ENCODE measurements at regions of chr3 and their contacts with region 1.

Region 1: GRCh38 chr3:58332575-58333188 is at the start of gene PXK:
- DNase-seq: no peak
- ATAC-seq: peak; percentile 92
- H3K4me3 ChIP-seq: peak within 1 kb of the TSS; percentile 93
- H3K27ac ChIP-seq: no peak within 1 kb of the TSS; the same call in 1 of the 2 replicates
- H3K4me1 ChIP-seq: peaks cover 7% of the 10 kb centered on the region; the same call in 1 of the 2 replicates
- H3K27me3 ChIP-seq: no peaks in the 10 kb centered on the region
- CTCF ChIP-seq: peak in 2 of 3 experiments; percentile 14 to 31; a peak in 1 of 6 replicates
- EP300 ChIP-seq: no peak
- POLR2A ChIP-seq: peak; percentile 68
- RAD21 ChIP-seq: peak; percentile 40; the same call in 1 of the 2 replicates
- polyA plus RNA-seq, gene PXK: 8.4 to 10.5 TPM

Region 2: GRCh38 chr3:58260261-58260731 is 72.4 kb before region 1 on chr3:
- CTCF ChIA-PET with region 1: no interaction called
- POLR2A ChIA-PET with region 1: no interaction called
- RAD21 ChIA-PET with region 1: no interaction called
- SMC1A ChIA-PET with region 1: no interaction called
- in situ Hi-C with region 1: no loop called
- intact Hi-C with region 1: no loop called
- DNase-seq: no peak
- ATAC-seq: no peak
- H3K4me3 ChIP-seq: no peak overlapping the region
- H3K27ac ChIP-seq: no peak overlapping the region
- H3K4me1 ChIP-seq: no peaks in the 10 kb centered on the region
- H3K27me3 ChIP-seq: no peaks in the 10 kb centered on the region
- CTCF ChIP-seq: no peak
- EP300 ChIP-seq: no peak
- POLR2A ChIP-seq: no peak
- RAD21 ChIP-seq: no peak

Region 3: GRCh38 chr3:58349792-58350626 is 17.3 kb after region 1 on chr3:
- CTCF ChIA-PET with region 1: interaction called, 204 read pairs
- POLR2A ChIA-PET with region 1: interaction called, 221 read pairs
- RAD21 ChIA-PET with region 1: interaction called, 149 read pairs
- SMC1A ChIA-PET with region 1: interaction called, 324 read pairs
- in situ Hi-C with region 1: no loop called
- intact Hi-C with region 1: loop called (anchors 1 kb)
- DNase-seq: peak; percentile 87
- ATAC-seq: peak; percentile 88
- H3K4me3 ChIP-seq: peak overlapping the region; percentile 9; the same call in 1 of the 2 replicates
- H3K27ac ChIP-seq: peak overlapping the region; percentile 85
- H3K4me1 ChIP-seq: peaks cover 55% of the 10 kb centered on the region
- H3K27me3 ChIP-seq: no peaks in the 10 kb centered on the region
- CTCF ChIP-seq: no peak
- EP300 ChIP-seq: 0 out of 4 replicates have a peak, but pooled peaks of 1 of the 2 experiments have one; percentile 18
- POLR2A ChIP-seq: peak; percentile 60
- RAD21 ChIP-seq: no peak

Region 4: DNA sequence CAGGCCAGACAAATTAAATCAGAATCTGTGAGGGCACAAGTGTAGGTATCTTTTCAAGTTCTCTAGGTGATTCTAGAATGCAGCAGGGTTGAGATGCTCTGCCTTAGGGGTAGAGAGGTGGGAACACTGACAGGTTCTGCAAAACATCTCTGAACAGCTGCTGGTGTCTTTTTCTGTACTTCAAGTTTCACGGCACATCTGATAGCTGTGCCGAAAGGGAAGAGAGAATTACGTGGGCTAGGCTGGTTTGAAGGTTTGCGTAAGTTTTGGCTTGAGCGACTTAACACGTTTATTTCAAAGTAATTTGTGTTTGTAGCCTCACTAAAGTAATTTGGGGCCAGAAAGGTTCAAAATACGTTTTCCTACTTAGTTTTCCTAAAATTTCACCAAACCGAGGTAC is 22.5 kb after region 1 on chr3:
- CTCF ChIA-PET with region 1: interaction called, 204 read pairs
- POLR2A ChIA-PET with region 1: interaction called, 221 read pairs
- RAD21 ChIA-PET with region 1: interaction called, 149 read pairs
- SMC1A ChIA-PET with region 1: interaction called, 324 read pairs
- in situ Hi-C with region 1: no loop called
- intact Hi-C with region 1: no loop called
- DNase-seq: no peak
- ATAC-seq: peak; percentile 70
- H3K4me3 ChIP-seq: peak overlapping the region; percentile 18; the same call in 1 of the 2 replicates
- H3K27ac ChIP-seq: no peak overlapping the region
- H3K4me1 ChIP-seq: peaks cover 59% of the 10 kb centered on the region
- H3K27me3 ChIP-seq: no peaks in the 10 kb centered on the region
- CTCF ChIP-seq: no peak
- EP300 ChIP-seq: no peak
- POLR2A ChIP-seq: no peak
- RAD21 ChIP-seq: no peak

Region 5: GRCh38 chr3:58419780-58420507 is 87.3 kb after region 1 on chr3:
- CTCF ChIA-PET with region 1: interaction called, 44 read pairs
- POLR2A ChIA-PET with region 1: no interaction called
- RAD21 ChIA-PET with region 1: interaction called, 35 read pairs
- SMC1A ChIA-PET with region 1: interaction called, 81 read pairs
- in situ Hi-C with region 1: no loop called
- intact Hi-C with region 1: no loop called
- DNase-seq: peak; percentile 32
- ATAC-seq: peak; percentile 87
- H3K4me3 ChIP-seq: no peak overlapping the region
- H3K27ac ChIP-seq: peak overlapping the region; percentile 64
- H3K4me1 ChIP-seq: peaks cover 24% of the 10 kb centered on the region
- H3K27me3 ChIP-seq: no peaks in the 10 kb centered on the region
- CTCF ChIP-seq: no peak
- EP300 ChIP-seq: peak in 1 of 2 experiments; percentile 45; a peak in 1 of 4 replicates
- POLR2A ChIP-seq: no peak
- RAD21 ChIP-seq: no peak

Region 6: GRCh38 chr3:58471025-58471887 is 138.6 kb after region 1 on chr3:
- CTCF ChIA-PET with region 1: no interaction called
- POLR2A ChIA-PET with region 1: no interaction called
- RAD21 ChIA-PET with region 1: no interaction called
- SMC1A ChIA-PET with region 1: no interaction called
- in situ Hi-C with region 1: no loop called
- intact Hi-C with region 1: no loop called
- DNase-seq: no peak
- ATAC-seq: peak; percentile 45
- H3K4me3 ChIP-seq: no peak overlapping the region
- H3K27ac ChIP-seq: no peak overlapping the region
- H3K4me1 ChIP-seq: peaks cover 6% of the 10 kb centered on the region; the same call in 1 of the 2 replicates
- H3K27me3 ChIP-seq: no peaks in the 10 kb centered on the region
- CTCF ChIP-seq: no peak
- EP300 ChIP-seq: no peak
- POLR2A ChIP-seq: no peak
- RAD21 ChIP-seq: no peak

Measured in GM12878 (cell line).